CD8-positive, alpha-beta memory T cell (primary cell): ENCODE measurements at regions of chr11 and their contacts with region 1.

Region 1: GRCh38 chr11:6682936-6683861 is at the start of gene MRPL17:
- DNase-seq: peak; percentile 97 to 100 (median 99)
- H3K4me3 ChIP-seq: peak within 1 kb of the TSS; percentile 98
- H3K4me3 Mint-ChIP-seq: peak within 1 kb of the TSS; percentile 87 to 99 (median 98)
- H3K27ac ChIP-seq: peak within 1 kb of the TSS; percentile 90
- H3K27ac Mint-ChIP-seq: peak within 1 kb of the TSS; percentile 93 to 100 (median 99)
- H3K4me1 ChIP-seq: peaks cover 17% of the 10 kb centered on the region
- H3K4me1 Mint-ChIP-seq: peaks cover 26 to 45% (median 42%) of the 10 kb centered on the region in 3 donors
- H3K27me3 ChIP-seq: no peaks in the 10 kb centered on the region
- H3K27me3 Mint-ChIP-seq: peaks cover 0 to 2% of the 10 kb centered on the region in 2 donors
- total RNA-seq, gene MRPL17: 124 to 129 TPM

Region 2: DNA sequence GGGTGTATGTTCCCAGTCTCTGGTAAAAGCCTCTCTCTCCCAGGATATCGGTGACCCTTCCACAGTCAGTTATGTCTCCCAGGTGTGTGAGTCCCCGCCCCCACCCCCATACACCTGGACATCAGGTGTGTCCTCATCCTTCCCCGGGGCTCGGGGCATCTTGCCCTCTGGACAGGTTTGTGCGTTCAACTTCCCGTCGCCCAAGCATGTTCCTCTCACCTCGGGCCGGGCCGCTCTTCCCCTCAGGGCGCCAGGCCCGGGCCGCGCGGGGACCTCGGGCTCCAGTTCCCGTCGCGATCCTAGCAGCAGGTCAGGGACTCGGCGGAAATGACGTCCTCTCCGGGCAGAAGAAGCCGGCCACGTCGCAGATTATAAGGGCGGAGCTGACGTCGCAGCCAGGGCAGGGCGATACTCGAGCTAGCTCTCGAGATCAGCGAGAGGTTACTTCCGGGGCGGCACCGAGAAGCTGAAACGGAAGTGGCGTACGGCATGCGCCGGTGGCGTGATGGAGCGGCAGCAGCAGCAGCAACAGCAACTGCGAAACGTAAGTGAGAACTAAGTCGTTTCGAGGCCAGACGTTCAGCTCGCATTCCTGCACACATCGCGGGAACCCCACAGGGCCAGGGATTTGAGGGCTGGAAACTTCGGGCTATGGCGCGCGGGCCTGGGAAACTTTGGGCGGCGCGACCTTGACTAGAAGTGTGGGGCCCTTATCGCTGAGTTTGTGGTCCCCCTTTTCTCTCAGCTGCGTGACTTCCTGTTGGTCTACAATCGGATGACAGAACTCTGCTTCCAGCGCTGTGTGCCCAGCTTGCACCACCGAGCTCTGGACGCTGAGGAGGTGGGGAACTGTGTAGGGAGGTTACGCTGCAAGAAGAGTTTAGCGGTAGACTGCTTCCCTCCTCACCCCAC is 201.9 kb before region 1 on chr11 and contains the starts of genes ARFIP2 and TIMM10B:
- CTCF ChIA-PET with region 1: interaction called, 12 read pairs
- POLR2A ChIA-PET with region 1: interaction called, 8 read pairs
- DNase-seq: peak; percentile 93 to 97 (median 94)
- H3K4me3 ChIP-seq: peak within 1 kb of the TSS; percentile 72
- H3K4me3 Mint-ChIP-seq: peak within 1 kb of the TSS; percentile 92 to 99 (median 97)
- H3K27ac ChIP-seq: peak within 1 kb of the TSS; percentile 94
- H3K27ac Mint-ChIP-seq: peak within 1 kb of the TSS; percentile 96 to 99 (median 98)
- H3K4me1 ChIP-seq: peaks cover 28% of the 10 kb centered on the region
- H3K4me1 Mint-ChIP-seq: peaks cover 35 to 47% (median 44%) of the 10 kb centered on the region in 3 donors
- H3K27me3 ChIP-seq: no peaks in the 10 kb centered on the region
- H3K27me3 Mint-ChIP-seq: no peaks in the 10 kb centered on the region
- total RNA-seq, gene ARFIP2: 46.9 to 47.5 TPM
- total RNA-seq, gene TIMM10B: 43.6 to 46.3 TPM

Region 3: DNA sequence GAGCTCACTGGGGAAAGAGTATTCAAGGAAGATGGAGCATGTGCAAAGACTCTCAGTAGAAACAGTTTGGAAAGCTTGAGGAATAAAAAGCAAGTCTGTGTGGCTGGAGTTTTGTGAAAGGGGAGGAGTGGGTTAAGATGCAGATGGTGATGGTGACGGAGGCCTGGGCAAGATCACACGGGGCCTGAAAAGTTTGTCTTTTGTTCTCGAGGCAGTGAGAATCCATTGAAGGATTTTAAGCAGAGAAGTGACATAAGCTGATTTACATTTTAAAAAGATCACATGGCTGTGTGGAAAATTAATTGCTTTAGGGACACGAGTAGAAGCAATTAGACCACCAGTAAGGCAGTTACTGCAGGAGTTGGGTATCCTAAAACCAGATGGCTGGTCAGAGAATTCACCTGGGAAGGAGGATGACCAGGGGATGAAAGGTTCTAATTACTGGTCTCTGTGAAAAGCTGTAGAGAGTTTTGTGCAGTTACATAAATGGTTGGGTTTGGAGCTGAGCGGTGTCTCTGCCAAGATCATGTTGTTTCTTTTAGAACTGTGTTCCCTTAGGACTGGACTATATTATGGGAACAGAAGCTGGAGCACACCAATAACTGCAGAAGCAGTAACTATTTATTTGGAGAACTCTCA is 86.8 kb before region 1 on chr11:
- CTCF ChIA-PET with region 1: interaction called, 68 read pairs
- POLR2A ChIA-PET with region 1: no interaction called
- DNase-seq: no peak
- H3K4me3 ChIP-seq: no peak overlapping the region
- H3K4me3 Mint-ChIP-seq: peak overlapping the region in 1 of 7 donors; percentile 17
- H3K27ac ChIP-seq: no peak overlapping the region
- H3K27ac Mint-ChIP-seq: peak overlapping the region in 4 of 8 donors; percentile 3 to 87 (median 36)
- H3K4me1 ChIP-seq: peaks cover under 1% of the 10 kb centered on the region
- H3K4me1 Mint-ChIP-seq: peaks cover 22 to 58% (median 40%) of the 10 kb centered on the region in 3 donors
- H3K27me3 ChIP-seq: no peaks in the 10 kb centered on the region
- H3K27me3 Mint-ChIP-seq: no peaks in the 10 kb centered on the region

Region 4: DNA sequence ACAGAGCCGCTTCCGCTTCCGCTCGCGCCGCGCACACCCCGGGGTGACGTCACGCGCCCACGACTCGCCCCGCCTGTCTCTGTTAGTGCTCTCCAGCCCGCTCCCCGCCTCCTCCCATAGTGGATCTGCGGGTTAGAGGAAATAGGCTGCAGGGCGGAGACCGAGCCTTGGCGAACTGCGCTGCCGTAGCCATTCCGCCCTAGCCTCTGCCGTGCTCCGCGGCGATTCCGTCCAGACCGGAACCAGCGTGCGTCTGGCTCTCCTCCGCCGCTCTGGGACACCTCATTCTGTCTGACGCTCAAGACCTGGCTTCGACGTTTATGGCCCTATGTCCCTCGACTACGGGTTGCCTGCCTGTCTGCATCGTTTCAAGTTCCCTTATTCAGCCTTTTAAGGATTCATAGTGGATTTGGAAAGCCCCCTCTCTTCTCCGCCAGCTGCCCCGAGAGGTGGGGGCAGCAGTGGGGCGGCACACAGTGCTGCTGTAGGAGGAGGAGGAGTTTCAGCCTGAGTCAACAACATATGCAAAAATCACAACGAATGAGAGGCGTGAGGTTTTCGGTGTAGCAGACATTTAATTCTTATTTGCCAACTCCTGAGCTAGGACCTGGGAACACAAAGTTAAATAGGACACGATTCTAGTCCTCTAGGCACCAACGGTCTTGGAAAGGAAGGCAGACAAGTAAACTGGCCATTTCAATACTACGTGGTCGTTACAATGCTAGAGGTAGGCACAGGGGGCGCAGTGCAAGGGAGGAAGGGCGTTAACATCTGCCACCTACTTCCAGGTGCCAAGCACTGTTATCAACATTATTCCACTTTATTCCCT is 70.8 kb before region 1 on chr11 and contains the start of gene TAF10:
- CTCF ChIA-PET with region 1: interaction called, 68 read pairs
- POLR2A ChIA-PET with region 1: interaction called, 26 read pairs
- DNase-seq: peak; percentile 94 to 97 (median 95)
- H3K4me3 ChIP-seq: peak within 1 kb of the TSS; percentile 93
- H3K4me3 Mint-ChIP-seq: peak within 1 kb of the TSS in 6 of 7 donors; percentile 89 to 95 (median 90)
- H3K27ac ChIP-seq: peak within 1 kb of the TSS; percentile 98
- H3K27ac Mint-ChIP-seq: peak within 1 kb of the TSS in 7 of 8 donors; percentile 93 to 99 (median 97)
- H3K4me1 ChIP-seq: peaks cover 42% of the 10 kb centered on the region
- H3K4me1 Mint-ChIP-seq: peaks cover 37 to 43% (median 41%) of the 10 kb centered on the region in 3 donors
- H3K27me3 ChIP-seq: no peaks in the 10 kb centered on the region
- H3K27me3 Mint-ChIP-seq: no peaks in the 10 kb centered on the region
- total RNA-seq, gene TAF10: 173 to 175 TPM

Region 5: DNA sequence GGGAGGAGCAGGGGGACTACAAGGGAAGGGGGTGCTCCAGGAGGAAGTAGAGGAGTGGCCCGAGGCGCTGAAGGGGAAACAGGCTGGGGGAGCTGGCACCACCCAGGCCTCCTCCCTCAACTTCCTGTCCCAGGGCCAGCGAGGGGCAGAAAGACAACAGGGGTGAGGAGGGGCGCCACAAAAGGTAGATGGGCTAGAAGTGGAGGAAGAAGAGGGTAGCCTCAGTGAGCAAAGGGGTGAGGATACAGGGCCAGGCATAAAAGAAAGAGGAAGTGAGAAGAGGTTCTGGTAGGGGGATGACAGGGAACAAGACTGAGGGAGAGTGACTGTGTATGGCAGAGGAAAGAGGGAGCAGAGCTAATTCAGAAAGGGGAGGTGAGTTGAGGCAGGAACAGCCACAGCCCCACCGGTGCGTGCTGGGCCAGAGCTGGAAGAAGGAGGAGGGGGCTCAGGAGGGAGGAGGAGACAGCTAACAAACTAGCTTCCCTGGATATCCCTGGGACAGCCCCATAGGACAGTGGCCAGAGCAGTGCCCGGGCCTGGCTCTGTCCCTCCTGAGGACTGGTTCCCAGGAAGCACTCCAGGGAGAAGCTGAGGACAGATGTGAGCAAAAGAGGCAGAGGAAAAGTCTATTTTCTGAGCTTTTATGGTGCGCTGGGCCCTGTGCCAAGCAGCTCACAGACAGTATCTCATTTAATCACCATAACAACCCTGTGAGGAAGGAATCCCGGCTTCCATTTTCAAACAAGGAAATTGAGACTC is 36.1 kb before region 1 on chr11:
- CTCF ChIA-PET with region 1: interaction called, 13 read pairs
- POLR2A ChIA-PET with region 1: no interaction called
- DNase-seq: peak in 3 of 5 donors; percentile 22 to 64 (median 41)
- H3K4me3 ChIP-seq: peak overlapping the region; percentile 40
- H3K4me3 Mint-ChIP-seq: no peak overlapping the region
- H3K27ac ChIP-seq: no peak overlapping the region
- H3K27ac Mint-ChIP-seq: no peak overlapping the region
- H3K4me1 ChIP-seq: peaks cover 65% of the 10 kb centered on the region
- H3K4me1 Mint-ChIP-seq: no peaks in the 10 kb centered on the region
- H3K27me3 ChIP-seq: no peaks in the 10 kb centered on the region
- H3K27me3 Mint-ChIP-seq: peaks cover 0 to 1% of the 10 kb centered on the region in 2 donors

Region 6: DNA sequence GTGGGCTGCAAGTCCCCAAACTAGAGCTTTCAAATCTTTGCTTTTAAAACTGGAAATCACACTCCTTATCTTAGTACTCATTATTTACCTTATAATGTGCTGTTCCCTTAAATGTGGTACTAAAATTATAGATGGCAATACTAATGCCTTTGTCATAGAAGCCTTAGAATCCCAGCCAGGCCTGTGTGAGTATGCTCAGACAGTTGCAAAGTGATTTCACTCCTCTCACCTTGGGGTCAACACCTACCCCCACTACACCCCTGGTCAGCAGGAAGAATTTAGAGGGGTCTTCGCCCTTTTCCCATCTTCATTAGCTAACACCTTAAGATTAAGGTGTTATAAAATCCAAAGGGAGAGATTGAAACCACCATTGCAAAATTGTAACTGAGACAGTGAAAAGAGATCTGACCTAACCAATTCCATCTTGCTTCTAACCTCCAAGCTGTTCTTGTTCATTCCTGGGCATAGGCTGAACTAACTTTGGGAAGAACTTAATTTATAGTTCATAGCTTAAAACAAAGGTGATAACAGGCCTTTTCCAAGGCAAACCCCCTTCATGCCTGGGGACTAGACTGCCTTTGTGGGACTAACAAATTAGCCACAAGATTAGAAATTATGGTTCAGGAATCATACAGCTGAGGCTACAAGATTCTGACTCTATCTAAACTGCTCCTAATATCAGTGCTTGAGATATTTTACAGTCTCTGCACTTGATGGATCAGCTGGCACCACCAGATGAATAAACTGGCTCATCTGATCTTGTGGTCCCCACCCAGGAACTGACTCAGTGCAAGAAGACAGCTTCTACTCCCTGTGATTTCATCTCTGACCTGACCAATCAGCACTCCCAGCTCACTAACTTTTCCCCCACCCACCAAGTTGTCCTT is 10.4 kb after region 1 on chr11:
- CTCF ChIA-PET with region 1: interaction called, 4 read pairs
- POLR2A ChIA-PET with region 1: interaction called, 12 read pairs
- DNase-seq: peak in 2 of 5 donors; percentile 22 to 24
- H3K4me3 ChIP-seq: no peak overlapping the region
- H3K4me3 Mint-ChIP-seq: peak overlapping the region in 1 of 7 donors; percentile 22
- H3K27ac ChIP-seq: no peak overlapping the region
- H3K27ac Mint-ChIP-seq: peak overlapping the region in 5 of 8 donors; percentile 40 to 88 (median 75)
- H3K4me1 ChIP-seq: peaks cover 16% of the 10 kb centered on the region
- H3K4me1 Mint-ChIP-seq: peaks cover 24 to 32% (median 27%) of the 10 kb centered on the region in 3 donors
- H3K27me3 ChIP-seq: no peaks in the 10 kb centered on the region
- H3K27me3 Mint-ChIP-seq: no peaks in the 10 kb centered on the region